ENCODE measurements at regions of chr15 and their contacts with region 1.

Region 1: DNA sequence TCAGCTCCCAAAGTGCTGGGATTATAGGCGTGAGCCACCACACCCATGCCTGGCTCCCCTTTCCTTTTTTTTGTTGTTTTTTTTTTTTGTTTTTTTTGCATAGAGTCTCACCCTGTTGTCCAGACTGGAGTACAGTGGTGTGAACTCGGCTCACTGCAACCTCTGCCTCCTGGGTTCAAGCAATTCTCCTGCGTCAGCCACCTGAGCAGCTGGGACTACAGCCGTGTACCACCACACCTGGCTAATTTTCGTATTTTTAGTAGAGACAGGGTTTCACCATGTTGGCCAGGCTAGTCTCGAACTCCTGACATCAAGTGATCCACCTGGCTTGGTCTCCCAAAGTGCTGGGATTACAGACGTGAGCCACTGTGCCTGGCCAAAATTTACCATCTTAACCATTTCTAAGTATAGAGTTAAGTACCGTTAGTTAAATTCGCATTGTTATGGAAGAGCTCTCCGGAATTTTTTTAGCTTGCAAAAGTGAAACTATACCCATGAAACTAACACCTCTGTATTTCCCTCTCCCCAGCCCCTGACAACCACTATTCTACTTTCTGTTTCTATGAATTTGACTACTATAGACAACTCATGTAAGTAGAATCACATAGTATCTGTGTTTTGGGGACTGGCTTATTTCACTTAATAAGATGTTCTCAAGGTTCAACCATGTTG is 70.9 kb upstream of the C15orf39 start:
- DNase-seq: peak; percentile 28
- H3K4me3 Mint-ChIP-seq: peak overlapping the region; percentile 62
- H3K27ac Mint-ChIP-seq: peak overlapping the region; percentile 44
- H3K4me1 Mint-ChIP-seq: peaks cover 30% of the 10 kb centered on the region
- H3K27me3 Mint-ChIP-seq: peaks cover 20% of the 10 kb centered on the region

Region 2: DNA sequence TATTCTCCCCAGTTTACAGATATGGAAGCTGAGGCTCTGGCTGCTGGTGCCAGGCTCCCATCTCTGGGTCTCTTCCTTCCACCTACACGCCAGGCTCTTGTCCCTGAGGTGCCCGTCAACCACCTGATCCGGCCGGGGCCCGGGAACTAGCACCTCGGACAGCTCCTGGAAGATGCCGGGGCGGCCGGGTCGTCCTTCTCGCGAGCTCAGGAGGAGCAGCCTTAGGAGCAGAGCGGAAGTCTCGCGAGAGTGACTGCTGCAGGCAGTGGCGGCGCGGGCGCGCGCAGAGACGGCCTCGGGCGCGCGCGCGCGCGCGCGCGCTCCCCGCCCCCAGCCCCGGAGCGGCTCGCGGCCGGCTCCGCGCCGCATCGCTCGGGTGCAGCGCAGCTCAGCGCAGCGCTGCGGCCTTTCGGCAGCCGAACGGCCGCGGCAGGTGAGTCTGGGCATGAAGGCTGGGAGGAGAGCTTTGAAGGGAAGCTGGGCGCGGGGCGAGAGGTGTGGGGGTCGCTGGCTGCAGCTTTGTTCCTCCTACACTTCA is 135.4 kb before region 1 on chr15 and contains the start of gene SCAMP5:
- intact Hi-C with region 1: no loop called
- DNase-seq: peak; percentile 92
- H3K4me3 Mint-ChIP-seq: peak within 1 kb of the TSS; percentile 70
- H3K27ac Mint-ChIP-seq: no peak within 1 kb of the TSS
- H3K4me1 Mint-ChIP-seq: peaks cover 4% of the 10 kb centered on the region
- H3K27me3 Mint-ChIP-seq: peaks cover 33% of the 10 kb centered on the region
- total RNA-seq, gene SCAMP5: 2.0 and 3.5 TPM in 2 replicates

Region 3: GRCh38 chr15:75042730-75043508 is 87.8 kb before region 1 on chr15:
- intact Hi-C with region 1: loop called (anchors 1 kb)
- DNase-seq: peak; percentile 71
- H3K4me3 Mint-ChIP-seq: peak overlapping the region; percentile 41
- H3K27ac Mint-ChIP-seq: peak overlapping the region; percentile 77
- H3K4me1 Mint-ChIP-seq: peaks cover 87% of the 10 kb centered on the region
- H3K27me3 Mint-ChIP-seq: no peaks in the 10 kb centered on the region

Region 4: DNA sequence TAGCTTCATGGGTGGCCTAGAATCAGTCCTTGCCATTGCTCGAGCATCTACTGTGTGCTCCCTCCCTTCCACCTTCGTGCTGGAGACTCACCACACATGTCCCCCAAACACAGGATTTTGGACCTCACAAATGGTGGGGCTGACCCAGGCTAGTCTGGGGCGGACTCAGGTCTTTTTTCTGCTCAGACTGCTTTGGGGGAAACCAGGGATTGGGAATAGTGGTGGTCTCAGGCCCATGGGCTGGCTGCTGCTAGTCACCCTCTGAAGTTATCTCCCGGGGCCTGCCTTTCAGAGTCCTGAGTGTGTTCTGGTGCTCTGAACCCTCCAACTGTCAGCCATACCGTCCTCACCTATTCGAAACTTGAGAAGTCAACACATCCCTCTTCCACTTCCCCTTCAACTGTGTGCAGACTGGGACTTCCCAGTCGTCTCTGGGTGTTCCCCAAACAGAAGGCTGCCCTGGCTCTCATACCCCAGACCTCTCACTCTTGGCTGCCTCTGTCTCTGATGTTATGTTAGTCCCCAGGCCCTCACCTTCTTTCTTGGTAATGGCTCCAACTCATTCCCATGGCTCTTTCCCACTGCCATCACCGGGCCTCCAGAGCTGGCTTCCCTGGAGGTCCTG is 61.3 kb before region 1 on chr15:
- intact Hi-C with region 1: loop called (anchors 1 kb)
- DNase-seq: peak; percentile 22
- H3K4me3 Mint-ChIP-seq: peak overlapping the region; percentile 46
- H3K27ac Mint-ChIP-seq: peak overlapping the region; percentile 82
- H3K4me1 Mint-ChIP-seq: peaks cover 88% of the 10 kb centered on the region
- H3K27me3 Mint-ChIP-seq: no peaks in the 10 kb centered on the region

Region 5: GRCh38 chr15:75091814-75092213 is 38.9 kb before region 1 on chr15:
- intact Hi-C with region 1: loop called (anchors 1 kb)
- DNase-seq: no peak
- H3K4me3 Mint-ChIP-seq: no peak overlapping the region
- H3K27ac Mint-ChIP-seq: peak overlapping the region; percentile 42
- H3K4me1 Mint-ChIP-seq: peaks cover 28% of the 10 kb centered on the region
- H3K27me3 Mint-ChIP-seq: peaks cover 8% of the 10 kb centered on the region

Region 6: DNA sequence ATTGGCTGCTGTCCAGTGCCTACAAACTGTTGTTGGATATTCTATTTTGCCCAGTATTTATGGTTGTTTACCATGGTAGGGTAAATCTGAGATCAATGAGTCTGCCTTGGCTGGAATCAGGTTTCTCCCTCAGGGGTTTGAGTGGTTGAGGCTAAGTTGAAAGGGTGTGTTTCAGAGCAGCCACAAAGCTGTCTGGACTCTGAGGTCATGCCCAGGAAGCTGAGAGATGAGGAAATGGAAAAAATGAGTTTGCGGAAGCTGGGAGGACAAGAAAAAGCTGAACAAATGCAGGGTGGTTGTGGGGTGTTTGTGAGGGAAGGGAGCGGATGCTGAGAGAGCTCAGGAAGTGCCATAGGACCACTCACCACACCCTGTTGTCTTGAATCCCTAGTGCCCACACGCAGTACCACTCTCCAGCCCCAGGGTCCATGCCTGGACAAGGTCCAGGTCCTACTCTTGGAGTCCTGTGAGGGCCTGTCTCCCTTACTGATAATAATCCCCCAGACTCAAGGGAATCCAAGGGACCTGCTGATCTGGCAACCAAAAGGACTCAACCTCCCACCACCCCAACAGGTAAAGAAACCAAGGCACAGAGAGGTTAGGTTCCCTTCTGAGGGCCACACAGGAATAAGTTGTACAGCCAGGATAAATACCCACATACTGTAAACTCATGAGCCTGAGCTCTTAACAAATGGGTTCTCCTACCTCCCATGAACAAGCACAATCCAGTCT is 25.8 kb before region 1 on chr15:
- intact Hi-C with region 1: loop called (anchors 1 kb)
- DNase-seq: peak; percentile 55
- H3K4me3 Mint-ChIP-seq: peak overlapping the region; percentile 28
- H3K27ac Mint-ChIP-seq: peak overlapping the region; percentile 89
- H3K4me1 Mint-ChIP-seq: peaks cover 52% of the 10 kb centered on the region
- H3K27me3 Mint-ChIP-seq: peaks cover 5% of the 10 kb centered on the region

Region 7: GRCh38 chr15:75153087-75153486 is 22.4 kb after region 1 on chr15:
- intact Hi-C with region 1: loop called (anchors 1 kb)
- DNase-seq: peak; percentile 23
- H3K4me3 Mint-ChIP-seq: no peak overlapping the region
- H3K27ac Mint-ChIP-seq: no peak overlapping the region
- H3K4me1 Mint-ChIP-seq: peaks cover 41% of the 10 kb centered on the region
- H3K27me3 Mint-ChIP-seq: peaks cover 2% of the 10 kb centered on the region

Region 8: GRCh38 chr15:75171408-75171807 is 40.7 kb after region 1 on chr15:
- intact Hi-C with region 1: loop called (anchors 1 kb)
- DNase-seq: peak; percentile 43
- H3K4me3 Mint-ChIP-seq: peak overlapping the region; percentile 24
- H3K27ac Mint-ChIP-seq: peak overlapping the region; percentile 71
- H3K4me1 Mint-ChIP-seq: peaks cover 62% of the 10 kb centered on the region
- H3K27me3 Mint-ChIP-seq: no peaks in the 10 kb centered on the region

Region 9: DNA sequence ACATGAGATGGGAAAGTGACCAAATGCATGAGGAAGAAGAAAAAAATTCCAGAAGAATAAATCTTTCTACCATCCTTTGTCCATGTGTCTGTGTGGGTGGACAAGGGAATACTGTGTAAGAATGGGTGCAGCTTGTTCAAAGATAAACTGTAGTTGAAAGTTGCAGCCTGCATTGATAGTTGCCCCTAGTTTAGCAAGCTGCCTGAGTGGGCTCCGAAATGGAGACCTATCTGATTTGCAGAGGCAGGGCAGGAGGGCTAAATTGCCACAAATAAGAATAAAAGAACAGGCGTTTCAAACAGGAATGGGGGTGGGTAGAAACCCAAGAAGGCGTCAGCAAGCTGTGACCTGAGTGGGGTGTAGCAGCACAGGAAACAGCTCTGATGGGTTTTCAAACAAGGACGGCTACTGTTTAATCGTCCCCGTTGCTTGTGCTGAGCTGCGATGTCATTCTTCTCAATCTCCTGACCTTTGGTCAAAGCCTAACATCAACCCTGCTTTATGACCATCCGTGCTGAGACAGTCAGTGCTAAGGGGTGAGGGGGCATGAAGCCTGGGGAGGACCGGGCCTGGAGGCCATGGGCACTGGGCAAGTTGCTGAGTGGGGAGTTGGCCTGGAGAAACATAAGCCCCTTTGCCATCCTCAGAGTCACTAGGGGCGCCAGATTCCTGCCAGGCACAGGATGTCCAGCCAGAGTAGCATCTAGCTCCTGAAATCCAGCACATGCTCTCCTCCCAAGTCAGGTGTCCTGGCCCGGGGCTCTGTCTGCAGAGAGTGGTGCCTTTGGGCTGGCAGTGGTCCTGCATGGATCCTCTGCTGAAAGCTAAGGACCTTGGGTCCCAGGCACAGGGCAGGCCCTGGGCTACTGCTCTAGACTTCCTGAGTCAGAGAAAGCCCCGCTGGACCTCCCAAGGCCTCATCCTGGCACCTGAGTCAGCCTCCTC is 51.7 kb after region 1 on chr15:
- intact Hi-C with region 1: no loop called
- DNase-seq: no peak
- H3K4me3 Mint-ChIP-seq: no peak overlapping the region
- H3K27ac Mint-ChIP-seq: no peak overlapping the region
- H3K4me1 Mint-ChIP-seq: peaks cover 25% of the 10 kb centered on the region
- H3K27me3 Mint-ChIP-seq: peaks cover 36% of the 10 kb centered on the region

Region 10: DNA sequence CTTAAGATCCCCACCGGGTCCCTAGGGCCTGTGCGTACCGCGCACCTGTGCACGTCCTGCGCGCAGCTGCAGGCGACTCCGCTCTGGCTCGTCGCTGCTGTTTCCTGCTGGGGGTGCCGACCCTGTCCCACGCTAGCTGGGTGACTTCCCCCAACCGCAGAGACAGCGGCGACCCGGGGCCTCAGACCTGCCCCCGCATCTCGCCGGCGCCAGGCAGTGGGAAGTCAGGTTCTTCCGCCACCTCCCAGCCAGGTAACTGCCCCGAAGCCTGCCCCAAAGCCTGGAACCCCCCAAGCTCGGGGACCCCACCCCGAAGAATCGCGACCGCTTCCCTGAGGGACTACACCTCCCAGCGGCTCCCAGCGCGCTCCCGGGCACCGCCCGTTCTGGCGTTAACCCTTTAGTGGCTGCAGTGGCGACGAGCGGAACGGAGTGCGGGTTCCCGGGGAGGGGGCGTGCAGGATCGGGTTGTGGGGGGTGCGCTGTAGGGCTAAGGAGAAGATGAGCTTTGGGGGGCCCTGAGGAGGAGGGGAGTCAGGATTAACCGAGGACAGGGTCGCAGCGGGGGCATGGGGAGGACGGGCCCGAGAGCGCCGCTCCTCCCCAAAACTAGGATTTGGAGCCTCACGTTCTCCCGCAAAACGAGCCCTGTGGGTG is 216.6 kb after region 1 on chr15:
- intact Hi-C with region 1: no loop called
- DNase-seq: peak; percentile 28
- H3K4me3 Mint-ChIP-seq: peak overlapping the region; percentile 75
- H3K27ac Mint-ChIP-seq: peak overlapping the region; percentile 24
- H3K4me1 Mint-ChIP-seq: peaks cover 26% of the 10 kb centered on the region
- H3K27me3 Mint-ChIP-seq: peaks cover 21% of the 10 kb centered on the region